Sigmoid colon (tissue), 7 donors: ENCODE measurements at regions of chr6 and their contacts with region 1.

Region 1: GRCh38 chr6:168895102-168895812 is 358.4 kb downstream of the THBS2 start:
- DNase-seq: peak; percentile 91
- H3K4me3 ChIP-seq: peak overlapping the region in 2 of 4 donors; percentile 14 to 19
- H3K27ac ChIP-seq: peak overlapping the region in 1 of 4 donors; percentile 20
- H3K4me1 ChIP-seq: peaks cover 0 to 49% (median 14%) of the 10 kb centered on the region in 4 donors
- H3K27me3 ChIP-seq: no peaks in the 10 kb centered on the region
- CTCF ChIP-seq: peak; percentile 83 to 96 (median 88)
- EP300 ChIP-seq: no peak
- POLR2A ChIP-seq: no peak

Region 2: DNA sequence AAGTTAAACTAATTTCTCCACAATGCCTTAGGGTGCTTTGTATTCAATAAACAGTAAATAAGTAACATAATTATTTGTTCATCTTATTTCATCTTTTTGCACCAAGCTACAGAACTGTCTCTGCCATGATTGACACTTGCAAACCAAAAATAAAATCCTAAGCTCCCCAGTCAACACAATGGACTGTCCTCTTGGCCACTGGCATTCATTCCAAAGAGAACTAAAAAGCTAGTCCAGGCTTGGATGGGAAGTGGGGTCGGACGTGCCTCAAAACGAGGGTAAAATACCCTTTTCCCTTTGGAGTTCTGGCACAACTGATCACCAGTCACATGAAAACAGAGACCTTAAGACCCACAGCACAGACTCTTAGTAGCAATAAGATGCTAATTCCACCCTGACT is 424.8 kb after region 1 on chr6:
- intact Hi-C with region 1: no loop called
- DNase-seq: no peak
- H3K4me3 ChIP-seq: no peak overlapping the region
- H3K27ac ChIP-seq: no peak overlapping the region
- H3K4me1 ChIP-seq: no peaks in the 10 kb centered on the region
- H3K27me3 ChIP-seq: no peaks in the 10 kb centered on the region
- CTCF ChIP-seq: no peak
- EP300 ChIP-seq: no peak
- POLR2A ChIP-seq: no peak

Region 3: DNA sequence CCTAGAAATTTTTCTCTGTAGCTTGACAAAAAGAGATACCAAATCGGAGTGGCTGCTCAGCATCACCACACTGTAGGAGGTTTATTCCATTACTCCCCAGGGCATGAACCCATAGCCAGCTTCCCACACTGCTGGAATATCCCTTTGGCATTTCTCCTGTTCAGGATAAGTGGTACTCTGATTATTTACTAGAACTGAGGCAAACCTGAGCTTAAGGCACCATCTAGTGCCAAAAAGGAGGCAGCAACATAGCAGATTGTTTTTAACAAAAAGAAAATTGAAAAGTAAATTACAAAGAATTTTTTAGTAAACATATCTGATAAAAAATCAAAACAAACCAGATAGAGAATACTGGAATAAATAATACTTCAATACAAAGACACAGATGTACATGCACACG is 624.8 kb after region 1 on chr6:
- intact Hi-C with region 1: loop called (anchors 2 kb)
- DNase-seq: no peak
- H3K4me3 ChIP-seq: no peak overlapping the region
- H3K27ac ChIP-seq: no peak overlapping the region
- H3K4me1 ChIP-seq: peaks cover 0 to 7% (median 3%) of the 10 kb centered on the region in 4 donors
- H3K27me3 ChIP-seq: no peaks in the 10 kb centered on the region
- CTCF ChIP-seq: peak in 2 of 4 experiments; percentile 27 to 51
- EP300 ChIP-seq: no peak
- POLR2A ChIP-seq: no peak

Region 4: DNA sequence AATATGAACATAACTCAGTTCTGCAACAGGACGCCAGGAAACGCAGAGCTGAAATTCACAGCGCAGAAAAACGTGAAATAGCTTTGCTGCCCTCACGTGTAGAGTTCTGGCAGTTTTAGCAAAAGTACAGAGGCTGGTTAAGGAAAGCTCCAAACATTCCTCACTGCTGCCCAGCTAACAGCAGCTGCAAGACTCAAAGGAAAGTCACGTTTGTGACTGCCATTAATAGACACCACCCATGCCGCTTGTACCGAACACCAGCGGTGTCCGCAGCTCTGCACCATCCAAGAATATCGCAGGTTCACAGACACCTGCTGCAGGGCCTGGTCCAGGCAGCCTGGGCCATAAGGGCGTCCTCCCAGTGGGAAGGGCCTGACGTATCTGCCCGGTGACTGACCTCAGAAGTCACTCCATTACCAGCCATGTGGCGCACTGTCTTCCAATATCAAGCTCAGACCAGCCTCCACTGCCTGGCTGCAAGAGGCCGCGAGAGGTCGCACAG is 745.1 kb after region 1 on chr6:
- intact Hi-C with region 1: loop called (anchors 5 kb)
- DNase-seq: no peak
- H3K4me3 ChIP-seq: no peak overlapping the region
- H3K27ac ChIP-seq: no peak overlapping the region
- H3K4me1 ChIP-seq: peaks cover 0 to 6% (median 1%) of the 10 kb centered on the region in 4 donors
- H3K27me3 ChIP-seq: no peaks in the 10 kb centered on the region
- CTCF ChIP-seq: peak in 3 of 4 experiments; percentile 32 to 39 (median 33)
- EP300 ChIP-seq: no peak
- POLR2A ChIP-seq: no peak